AG04450 (cell line): ENCODE measurements at regions of chr21 and their contacts with region 1.

Region 1: GRCh38 chr21:34745557-34746255 is 76.9 kb downstream of the CLIC6 start:
- DNase-seq: peak; percentile 73
- H3K4me3 ChIP-seq: peak overlapping the region; percentile 23; the same call in 1 of the 2 replicates
- H3K27ac ChIP-seq: no peak overlapping the region
- H3K27me3 ChIP-seq: peaks cover 6% of the 10 kb centered on the region
- CTCF ChIP-seq: peak; percentile 94

Region 2: DNA sequence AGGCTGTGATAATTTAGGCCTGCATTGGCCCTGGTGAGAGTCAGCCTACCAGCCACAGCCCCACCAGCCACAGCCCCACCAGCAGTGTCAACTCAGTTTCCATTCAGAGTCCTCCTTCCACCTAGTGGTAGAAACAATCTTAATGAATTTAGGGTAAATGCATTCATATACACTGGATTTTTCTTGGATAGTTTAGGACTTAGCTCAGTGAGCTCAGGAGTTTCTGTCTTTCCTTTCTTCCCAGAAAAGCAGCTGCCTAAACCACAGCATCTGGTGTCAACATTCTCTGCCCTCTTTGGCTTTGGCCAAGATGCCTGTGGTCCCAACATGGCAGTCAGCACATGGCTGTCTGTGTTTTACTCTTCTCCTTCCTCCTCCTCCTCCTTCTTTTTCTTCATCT is 17.1 kb after region 1 on chr21:
- CTCF ChIA-PET with region 1: interaction called, 31 read pairs
- POLR2A ChIA-PET with region 1: no interaction called
- DNase-seq: peak; percentile 52
- H3K4me3 ChIP-seq: no peak overlapping the region
- H3K27ac ChIP-seq: no peak overlapping the region
- H3K27me3 ChIP-seq: no peaks in the 10 kb centered on the region
- CTCF ChIP-seq: peak; percentile 33

Region 3: DNA sequence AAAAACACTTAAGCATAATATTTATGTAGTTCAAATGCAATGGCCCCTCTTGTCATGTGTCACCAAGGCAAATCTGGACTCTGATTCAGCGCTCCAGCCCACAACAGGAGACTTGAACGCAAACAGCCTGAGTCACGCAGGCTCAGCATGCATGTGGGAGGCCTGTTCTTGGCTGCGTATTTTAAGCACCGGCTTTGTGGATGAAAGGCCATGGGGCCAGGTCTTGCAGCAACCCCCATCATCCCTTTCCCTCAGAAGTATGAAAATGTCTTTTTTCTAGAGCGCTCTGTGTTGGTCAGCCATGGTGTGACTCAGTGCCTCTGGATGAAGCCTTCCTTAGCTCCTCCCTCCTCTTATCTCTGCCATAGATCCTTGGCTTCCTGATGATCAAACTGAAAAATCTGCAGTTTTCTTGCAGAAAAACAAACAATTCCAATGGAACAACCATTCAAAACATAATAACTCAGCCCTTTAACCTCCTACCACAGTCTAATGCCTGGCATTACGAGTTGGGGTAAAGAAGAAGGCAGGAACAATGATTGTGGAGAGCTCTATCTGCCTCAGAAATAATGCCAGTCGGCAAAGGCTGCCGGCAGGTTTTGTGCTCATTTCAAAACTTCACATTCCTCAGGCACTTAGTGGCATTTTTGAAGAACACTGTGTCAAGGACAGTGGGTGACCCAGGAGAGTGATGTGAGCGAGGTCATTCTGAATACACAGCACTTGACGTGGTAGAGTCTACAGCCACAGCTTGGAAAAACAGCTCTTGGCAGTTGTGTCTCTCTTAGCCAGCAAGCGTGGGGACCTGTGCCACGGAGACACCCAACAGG is 90.6 kb after region 1 on chr21:
- CTCF ChIA-PET with region 1: interaction called, 13 read pairs
- POLR2A ChIA-PET with region 1: interaction called, 4 read pairs
- DNase-seq: peak; percentile 99
- H3K4me3 ChIP-seq: peak overlapping the region; percentile 20
- H3K27ac ChIP-seq: peak overlapping the region; percentile 94
- H3K27me3 ChIP-seq: no peaks in the 10 kb centered on the region
- CTCF ChIP-seq: no peak

Region 4: GRCh38 chr21:34857874-34858273 is 112.2 kb after region 1 on chr21:
- CTCF ChIA-PET with region 1: interaction called, 12 read pairs
- POLR2A ChIA-PET with region 1: no interaction called
- DNase-seq: no peak
- H3K4me3 ChIP-seq: no peak overlapping the region
- H3K27ac ChIP-seq: no peak overlapping the region
- H3K27me3 ChIP-seq: no peaks in the 10 kb centered on the region
- CTCF ChIP-seq: peak; percentile 39

Region 5: DNA sequence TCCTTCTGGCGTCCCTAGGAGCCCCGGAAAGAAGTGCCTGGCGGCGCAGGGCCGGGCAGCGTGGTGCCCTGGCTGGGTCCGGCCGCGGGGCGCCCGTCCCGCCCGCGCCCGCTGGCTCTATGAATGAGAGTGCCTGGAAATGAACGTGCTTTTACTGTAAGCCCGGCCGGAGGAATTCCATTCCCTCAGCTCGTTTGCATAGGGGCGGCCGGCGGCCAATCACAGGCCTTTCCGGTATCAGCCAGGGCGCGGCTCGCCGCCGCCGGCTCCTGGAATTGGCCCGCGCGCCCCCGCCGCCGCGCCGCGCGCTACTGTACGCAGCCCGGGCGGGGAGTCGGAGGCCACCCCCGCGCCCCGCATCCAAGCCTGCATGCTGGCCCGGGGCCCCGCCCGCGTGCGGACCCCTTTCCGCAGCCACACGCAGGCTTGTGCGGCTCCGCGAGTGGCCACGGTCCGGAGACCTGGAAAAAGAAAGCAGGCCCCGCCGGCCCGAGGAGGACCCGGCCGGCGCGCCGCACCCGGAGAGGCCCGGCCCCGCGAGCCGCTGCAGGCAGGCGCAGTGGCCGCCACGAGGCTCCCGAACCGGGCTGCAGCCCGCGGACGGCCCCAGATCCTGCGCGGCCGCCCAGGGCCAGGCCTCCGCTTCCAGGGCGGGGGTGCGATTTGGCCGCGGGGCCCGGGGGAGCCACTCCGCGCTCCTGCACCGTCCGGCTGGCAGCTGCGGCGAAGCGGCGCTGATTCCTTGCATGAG is 143.0 kb after region 1 on chr21:
- CTCF ChIA-PET with region 1: interaction called, 67 read pairs
- POLR2A ChIA-PET with region 1: interaction called, 29 read pairs
- DNase-seq: peak; percentile 92
- H3K4me3 ChIP-seq: peak overlapping the region; percentile 92
- H3K27ac ChIP-seq: peak overlapping the region; percentile 99
- H3K27me3 ChIP-seq: no peaks in the 10 kb centered on the region
- CTCF ChIP-seq: no peak

Region 6: DNA sequence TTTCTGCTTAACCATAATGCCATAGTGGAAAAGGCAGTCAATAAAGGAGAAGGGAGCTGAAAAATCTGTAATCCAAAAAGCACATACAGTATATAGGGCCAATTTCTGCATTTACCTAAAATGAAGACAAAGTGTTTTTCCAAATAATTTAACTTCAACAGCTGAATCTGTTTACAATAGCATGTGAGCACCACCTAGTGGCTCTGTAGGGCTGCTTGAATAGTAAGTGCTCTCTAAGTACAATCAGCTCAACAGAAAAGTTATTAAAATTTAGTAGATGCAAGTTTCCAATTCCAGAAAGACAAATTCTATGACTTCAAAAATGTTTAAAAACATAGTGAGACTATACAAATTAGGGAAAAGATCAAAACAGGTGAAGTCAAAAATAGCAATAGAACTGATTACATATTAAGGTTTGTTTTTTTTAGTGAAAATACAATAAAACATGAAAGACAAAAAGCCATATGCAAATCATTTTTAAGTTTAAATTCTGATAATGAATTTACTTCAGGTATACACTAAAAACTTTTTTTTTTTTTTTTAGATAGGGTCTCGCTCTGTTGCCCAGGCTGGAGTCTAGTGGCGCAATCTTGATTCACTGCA is 1094.6 kb after region 1 on chr21:
- CTCF ChIA-PET with region 1: interaction called, 34 read pairs
- POLR2A ChIA-PET with region 1: no interaction called
- DNase-seq: peak; percentile 69
- H3K4me3 ChIP-seq: no peak overlapping the region
- H3K27ac ChIP-seq: no peak overlapping the region
- H3K27me3 ChIP-seq: no peaks in the 10 kb centered on the region
- CTCF ChIP-seq: peak; percentile 92